GM12878 (cell line): ENCODE measurements at regions of chr15 and their contacts with region 1.

Region 1: GRCh38 chr15:99565299-99566156 is at the start of gene MEF2A:
- DNase-seq: peak; percentile 69
- ATAC-seq: peak; percentile 71
- H3K4me3 ChIP-seq: peak within 1 kb of the TSS; percentile 99
- H3K27ac ChIP-seq: peak within 1 kb of the TSS; percentile 97
- H3K4me1 ChIP-seq: peaks cover 10% of the 10 kb centered on the region
- H3K27me3 ChIP-seq: no peaks in the 10 kb centered on the region
- CTCF ChIP-seq: no peak
- EP300 ChIP-seq: peak in 1 of 2 experiments; percentile 68; a peak in 1 of 4 replicates
- POLR2A ChIP-seq: peak; percentile 91
- RAD21 ChIP-seq: peak; percentile 9; the same call in 1 of the 2 replicates
- polyA plus RNA-seq, gene MEF2A: 7.2 to 7.9 TPM

Region 2: GRCh38 chr15:99282121-99282520 is 283.4 kb before region 1 on chr15:
- CTCF ChIA-PET with region 1: no interaction called
- POLR2A ChIA-PET with region 1: no interaction called
- RAD21 ChIA-PET with region 1: interaction called, 3 read pairs
- SMC1A ChIA-PET with region 1: interaction called, 7 read pairs
- in situ Hi-C with region 1: no loop called
- intact Hi-C with region 1: loop called (anchors 5 kb)
- DNase-seq: no peak
- ATAC-seq: no peak; the same call in 1 of the 3 replicates
- H3K4me3 ChIP-seq: no peak overlapping the region
- H3K27ac ChIP-seq: no peak overlapping the region
- H3K4me1 ChIP-seq: no peaks in the 10 kb centered on the region
- H3K27me3 ChIP-seq: no peaks in the 10 kb centered on the region
- CTCF ChIP-seq: no peak
- EP300 ChIP-seq: no peak
- POLR2A ChIP-seq: no peak
- RAD21 ChIP-seq: no peak

Region 3: DNA sequence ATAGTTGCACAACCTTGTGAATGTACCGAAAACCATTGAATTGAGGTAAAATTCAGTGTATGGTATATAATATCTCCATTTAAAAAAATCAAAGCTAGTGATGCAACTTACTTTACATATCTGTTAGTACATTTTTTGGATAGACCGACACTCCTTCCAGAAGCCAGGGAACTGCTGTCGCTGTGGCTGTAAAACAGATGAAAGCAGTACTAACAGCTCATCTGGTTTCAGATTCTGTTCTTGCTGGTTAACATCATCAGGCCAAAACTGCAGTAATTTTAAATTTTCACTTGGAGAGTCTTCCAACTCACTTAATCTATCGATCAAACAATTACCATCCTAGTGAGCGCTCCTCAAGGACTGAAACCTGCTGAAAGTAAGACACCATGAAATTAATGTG is 169.2 kb before region 1 on chr15:
- CTCF ChIA-PET with region 1: no interaction called
- POLR2A ChIA-PET with region 1: no interaction called
- RAD21 ChIA-PET with region 1: no interaction called
- SMC1A ChIA-PET with region 1: no interaction called
- in situ Hi-C with region 1: no loop called
- intact Hi-C with region 1: no loop called
- DNase-seq: no peak
- ATAC-seq: no peak
- H3K4me3 ChIP-seq: no peak overlapping the region
- H3K27ac ChIP-seq: no peak overlapping the region
- H3K4me1 ChIP-seq: no peaks in the 10 kb centered on the region
- H3K27me3 ChIP-seq: no peaks in the 10 kb centered on the region
- CTCF ChIP-seq: no peak
- EP300 ChIP-seq: no peak
- POLR2A ChIP-seq: no peak
- RAD21 ChIP-seq: no peak

Region 4: DNA sequence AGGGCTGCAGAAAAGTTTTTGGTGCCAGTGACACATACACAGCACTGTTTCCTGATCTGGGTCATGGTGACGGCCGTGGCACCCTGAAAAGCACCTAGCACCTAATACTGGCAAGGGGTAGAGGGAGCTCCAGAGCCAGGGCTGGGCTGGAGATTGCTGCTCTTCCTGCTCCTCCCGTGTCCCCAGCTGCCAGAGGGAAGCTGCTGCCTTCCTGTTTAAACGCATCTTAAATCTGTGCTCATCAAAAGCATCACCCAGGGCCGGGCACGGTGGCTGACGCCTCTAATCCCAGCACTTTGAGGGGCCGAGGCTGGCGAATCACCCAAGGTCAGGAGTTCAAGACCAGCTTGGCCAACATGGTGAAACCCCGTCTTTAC is 156.4 kb before region 1 on chr15:
- CTCF ChIA-PET with region 1: no interaction called
- POLR2A ChIA-PET with region 1: no interaction called
- RAD21 ChIA-PET with region 1: no interaction called
- SMC1A ChIA-PET with region 1: interaction called, 13 read pairs
- in situ Hi-C with region 1: no loop called
- intact Hi-C with region 1: no loop called
- DNase-seq: no peak
- ATAC-seq: peak; percentile 80
- H3K4me3 ChIP-seq: no peak overlapping the region
- H3K27ac ChIP-seq: no peak overlapping the region
- H3K4me1 ChIP-seq: no peaks in the 10 kb centered on the region
- H3K27me3 ChIP-seq: no peaks in the 10 kb centered on the region; a peak in 1 of 4 replicates
- CTCF ChIP-seq: peak; percentile 33 to 52 (median 45); a peak in 5 of 6 replicates
- EP300 ChIP-seq: no peak
- POLR2A ChIP-seq: no peak
- RAD21 ChIP-seq: peak; percentile 61

Region 5: GRCh38 chr15:99502182-99502581 is 63.3 kb before region 1 on chr15:
- CTCF ChIA-PET with region 1: interaction called, 3 read pairs
- POLR2A ChIA-PET with region 1: interaction called, 13 read pairs
- RAD21 ChIA-PET with region 1: interaction called, 67 read pairs
- SMC1A ChIA-PET with region 1: interaction called, 16 read pairs
- in situ Hi-C with region 1: no loop called
- intact Hi-C with region 1: no loop called
- DNase-seq: peak; percentile 90
- ATAC-seq: peak; percentile 82
- H3K4me3 ChIP-seq: peak overlapping the region; percentile 33
- H3K27ac ChIP-seq: peak overlapping the region; percentile 95
- H3K4me1 ChIP-seq: peaks cover 53% of the 10 kb centered on the region
- H3K27me3 ChIP-seq: no peaks in the 10 kb centered on the region
- CTCF ChIP-seq: no peak
- EP300 ChIP-seq: peak; percentile 59 to 70; a peak in 2 of 4 replicates
- POLR2A ChIP-seq: peak; percentile 54
- RAD21 ChIP-seq: no peak

Region 6: GRCh38 chr15:99578809-99579208 is 13.3 kb after region 1 on chr15:
- CTCF ChIA-PET with region 1: no interaction called
- POLR2A ChIA-PET with region 1: interaction called, 4 read pairs
- RAD21 ChIA-PET with region 1: interaction called, 12 read pairs
- SMC1A ChIA-PET with region 1: interaction called, 24 read pairs
- in situ Hi-C with region 1: no loop called
- intact Hi-C with region 1: no loop called
- DNase-seq: no peak
- ATAC-seq: peak; percentile 75
- H3K4me3 ChIP-seq: no peak overlapping the region
- H3K27ac ChIP-seq: no peak overlapping the region
- H3K4me1 ChIP-seq: peaks cover 4% of the 10 kb centered on the region; the same call in 1 of the 2 replicates
- H3K27me3 ChIP-seq: no peaks in the 10 kb centered on the region
- CTCF ChIP-seq: no peak
- EP300 ChIP-seq: no peak
- POLR2A ChIP-seq: no peak
- RAD21 ChIP-seq: no peak

Region 7: GRCh38 chr15:99613887-99614647 is 48.5 kb after region 1 on chr15:
- CTCF ChIA-PET with region 1: interaction called, 4 read pairs
- POLR2A ChIA-PET with region 1: no interaction called
- RAD21 ChIA-PET with region 1: interaction called, 19 read pairs
- SMC1A ChIA-PET with region 1: interaction called, 18 read pairs
- in situ Hi-C with region 1: no loop called
- intact Hi-C with region 1: loop called (anchors 5 kb)
- DNase-seq: no peak
- ATAC-seq: peak; percentile 69
- H3K4me3 ChIP-seq: no peak overlapping the region
- H3K27ac ChIP-seq: peak overlapping the region; percentile 20; the same call in 1 of the 2 replicates
- H3K4me1 ChIP-seq: peaks cover 20% of the 10 kb centered on the region
- H3K27me3 ChIP-seq: no peaks in the 10 kb centered on the region
- CTCF ChIP-seq: no peak
- EP300 ChIP-seq: no peak
- POLR2A ChIP-seq: no peak
- RAD21 ChIP-seq: no peak

Region 8: DNA sequence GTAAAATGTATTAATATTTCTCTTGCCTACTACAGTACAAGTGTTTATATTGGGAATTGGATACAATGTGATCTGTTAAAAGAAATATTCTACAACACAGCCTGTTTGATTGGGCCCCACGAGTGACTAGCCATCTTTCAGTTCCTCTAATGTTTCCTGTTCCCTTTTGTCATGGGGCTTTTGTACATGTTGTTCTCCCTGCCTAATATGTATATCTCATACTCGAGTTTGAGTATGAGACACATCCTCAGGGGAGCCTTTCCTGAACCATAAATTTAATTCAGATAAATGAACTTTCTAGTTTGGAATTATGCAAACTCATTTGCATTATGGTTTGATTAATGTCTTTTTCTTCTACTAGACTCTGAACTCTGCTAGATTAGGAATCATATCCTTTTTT is 65.7 kb after region 1 on chr15:
- CTCF ChIA-PET with region 1: interaction called, 4 read pairs
- POLR2A ChIA-PET with region 1: interaction called, 5 read pairs
- RAD21 ChIA-PET with region 1: interaction called, 9 read pairs
- SMC1A ChIA-PET with region 1: interaction called, 28 read pairs
- in situ Hi-C with region 1: no loop called
- intact Hi-C with region 1: loop called (anchors 5 kb)
- DNase-seq: peak; percentile 74
- ATAC-seq: peak; percentile 98
- H3K4me3 ChIP-seq: peak overlapping the region; percentile 22; the same call in 1 of the 2 replicates
- H3K27ac ChIP-seq: peak overlapping the region; percentile 93
- H3K4me1 ChIP-seq: peaks cover 13% of the 10 kb centered on the region
- H3K27me3 ChIP-seq: no peaks in the 10 kb centered on the region
- CTCF ChIP-seq: no peak
- EP300 ChIP-seq: peak in 1 of 2 experiments; percentile 84; a peak in 1 of 4 replicates
- POLR2A ChIP-seq: no peak
- RAD21 ChIP-seq: peak; percentile 8; the same call in 1 of the 2 replicates